GM18951 (cell line): ENCODE measurements at regions of chr5 and their contacts with region 1.

Region 1: DNA sequence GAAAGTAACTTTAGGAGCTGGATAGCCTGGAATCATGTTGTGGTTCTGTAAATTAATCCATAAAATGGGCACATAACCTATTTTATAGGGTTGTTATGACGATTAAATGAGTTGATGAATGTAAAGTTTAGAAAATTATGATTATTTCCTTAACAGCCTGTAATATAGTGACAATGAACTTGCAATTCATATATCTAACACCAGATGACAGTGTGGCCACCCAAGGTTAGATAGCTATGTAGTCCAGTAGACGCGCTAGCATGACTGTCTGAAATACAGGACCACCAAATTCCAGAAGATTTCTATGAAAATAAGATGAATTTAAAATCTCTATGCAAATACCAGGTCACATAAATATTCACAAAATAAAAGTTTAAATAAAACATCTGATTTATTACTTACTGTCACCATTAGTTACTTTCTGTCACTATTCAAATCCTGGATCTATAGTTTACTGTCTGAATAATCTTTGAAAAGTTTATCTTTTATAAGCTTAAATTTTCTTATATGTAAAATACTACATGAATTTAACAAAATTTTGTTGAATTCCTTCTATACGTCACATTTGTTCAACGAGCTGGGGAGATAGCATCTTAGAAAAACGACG is 26.1 kb upstream of the MACIR start:
- POLR2A ChIP-seq: no peak

Region 2: DNA sequence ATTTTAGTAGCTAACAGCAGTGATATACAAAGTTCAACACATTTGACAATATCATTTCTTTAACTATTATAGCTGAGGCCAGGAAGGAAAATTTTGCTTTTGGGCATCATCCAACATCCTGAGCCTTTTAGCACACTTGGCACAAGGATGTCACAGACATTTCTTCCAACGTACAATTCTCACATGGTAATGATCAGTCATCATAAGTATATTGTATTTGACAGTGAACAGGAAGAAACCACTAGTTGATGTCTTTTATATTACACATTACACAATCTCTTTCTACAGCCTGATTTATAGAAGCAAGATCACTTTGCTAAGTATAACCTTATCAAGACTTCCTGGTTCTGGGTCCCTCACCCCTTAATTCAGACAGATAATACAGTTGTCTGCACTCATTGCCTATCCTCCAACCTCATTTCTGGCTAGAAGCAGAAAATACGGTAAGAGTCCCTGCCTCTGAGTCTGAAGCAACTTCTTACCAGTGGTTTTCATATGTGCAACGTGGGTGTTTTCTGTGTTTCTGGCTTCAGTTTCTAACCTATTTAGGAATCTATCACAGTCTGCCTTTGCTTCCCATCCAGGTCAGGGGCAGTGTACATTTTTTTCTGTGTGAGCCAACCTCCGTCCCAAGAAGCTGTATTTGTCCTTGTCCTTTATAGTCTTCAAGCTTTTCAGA is 309.6 kb before region 1 on chr5:
- in situ Hi-C with region 1: no loop called
- POLR2A ChIP-seq: no peak

Region 3: DNA sequence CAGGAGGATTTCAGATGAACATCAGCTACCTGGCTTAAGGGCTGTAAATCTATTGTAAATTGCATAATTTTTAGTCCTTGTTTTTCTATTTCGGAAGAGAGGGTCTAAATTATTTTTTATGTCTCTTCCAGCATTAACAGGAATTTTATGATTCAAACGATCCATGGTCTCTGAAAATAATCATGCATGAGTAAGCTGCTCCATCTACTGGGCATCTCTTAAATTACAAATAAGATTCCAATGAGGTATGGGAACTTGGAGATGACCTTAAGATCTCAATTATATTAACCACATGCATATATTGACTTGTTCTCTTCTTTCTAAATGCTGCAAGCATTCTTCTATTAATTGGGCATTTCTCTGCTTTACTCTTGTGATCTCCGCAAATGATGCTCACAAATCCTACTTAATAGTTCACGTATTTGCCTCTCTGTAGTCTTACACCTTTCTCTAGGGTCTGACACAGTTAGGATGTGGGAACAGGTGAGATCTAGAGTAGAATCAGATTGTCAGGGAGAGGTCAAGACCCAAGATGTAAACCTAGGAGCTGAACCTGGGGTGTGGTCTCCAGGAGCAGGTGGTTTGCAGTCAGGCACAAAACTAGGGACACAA is 243.2 kb after region 1 on chr5:
- in situ Hi-C with region 1: loop called (anchors 10 kb)
- POLR2A ChIP-seq: no peak